ENCODE measurements at regions of chr20 and their contacts with region 1.

Region 1: GRCh38 chr20:54219751-54220426 is 12.0 kb downstream of the PFDN4 start:
- DNase-seq: no peak
- H3K4me3 ChIP-seq: no peak overlapping the region
- H3K27ac ChIP-seq: no peak overlapping the region
- H3K27me3 ChIP-seq: no peaks in the 10 kb centered on the region
- CTCF ChIP-seq: peak; percentile 69

Region 2: GRCh38 chr20:54207743-54208547 is 11.9 kb before region 1 on chr20 and contains the start of gene PFDN4:
- CTCF ChIA-PET with region 1: interaction called, 41 read pairs
- POLR2A ChIA-PET with region 1: no interaction called
- DNase-seq: peak; percentile 56
- H3K4me3 ChIP-seq: peak within 1 kb of the TSS; percentile 94
- H3K27ac ChIP-seq: peak within 1 kb of the TSS; percentile 95
- H3K27me3 ChIP-seq: no peaks in the 10 kb centered on the region
- CTCF ChIP-seq: peak; percentile 81
- polyA plus RNA-seq, gene PFDN4: 63.9 and 104 TPM in 2 replicates

Region 3: DNA sequence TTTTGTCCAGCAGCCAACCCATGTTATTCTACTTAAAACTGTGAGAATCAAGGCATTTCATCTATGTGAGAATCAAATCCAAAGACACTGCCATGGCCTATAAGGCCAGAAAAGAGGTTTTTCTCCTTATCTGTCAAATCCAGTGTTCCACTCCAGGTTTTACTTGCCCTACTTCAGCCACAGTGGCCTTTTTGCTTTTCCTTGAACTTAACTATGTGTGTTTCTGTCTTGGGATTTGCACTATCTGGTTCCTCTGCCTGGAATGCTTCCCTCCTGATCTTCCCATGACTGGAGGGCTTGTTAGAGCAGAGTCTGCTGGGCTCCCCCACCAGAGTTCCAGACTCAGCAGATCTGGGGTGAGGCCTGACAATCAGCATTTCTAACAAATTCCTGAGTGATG is 142.4 kb after region 1 on chr20:
- CTCF ChIA-PET with region 1: no interaction called
- POLR2A ChIA-PET with region 1: no interaction called
- DNase-seq: no peak
- H3K4me3 ChIP-seq: no peak overlapping the region
- H3K27ac ChIP-seq: no peak overlapping the region
- H3K27me3 ChIP-seq: no peaks in the 10 kb centered on the region
- CTCF ChIP-seq: no peak

Measured in AG04450 (cell line).